ENCODE measurements at regions of chr5 and their contacts with region 1.

Region 1: DNA sequence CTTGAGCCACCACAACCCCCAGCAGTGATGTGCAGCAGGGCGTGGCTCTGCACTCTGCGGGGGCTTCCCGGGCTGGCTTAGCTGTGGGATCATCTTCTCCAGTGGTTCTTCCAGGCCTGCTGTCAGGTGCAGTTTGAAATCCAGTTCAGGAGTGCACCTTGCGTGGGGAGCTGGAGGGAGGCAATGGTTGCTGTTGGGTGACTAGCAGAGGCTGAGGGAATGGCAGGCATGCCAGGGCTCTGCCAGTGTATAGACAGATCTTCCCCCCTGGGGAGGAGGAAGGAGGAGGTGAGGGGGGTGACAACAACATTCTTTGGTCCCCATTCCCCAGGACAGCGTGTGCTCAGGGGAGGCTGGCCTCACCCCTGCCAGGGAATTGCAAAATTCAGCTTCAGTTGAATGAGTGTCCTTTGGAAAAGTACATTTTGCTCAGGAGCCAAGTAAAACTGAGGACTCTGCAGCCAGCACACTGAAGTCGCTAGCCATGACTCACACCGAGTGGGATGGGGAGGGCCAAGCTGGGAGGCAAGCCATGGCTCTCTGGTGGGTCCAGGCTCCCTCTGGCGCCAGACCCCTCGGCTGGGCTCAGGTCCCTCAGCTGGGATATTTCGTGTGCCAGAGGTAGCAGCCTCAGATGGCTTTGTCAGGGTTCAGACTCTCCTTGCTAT is 35.0 kb downstream of the ERGIC1 start:
- DNase-seq: peak; percentile 92
- H3K4me3 ChIP-seq: no peak overlapping the region
- H3K27ac ChIP-seq: peak overlapping the region; percentile 94
- H3K4me1 ChIP-seq: peaks cover 62% of the 10 kb centered on the region
- H3K27me3 ChIP-seq: no peaks in the 10 kb centered on the region
- CTCF ChIP-seq: peak; percentile 38 to 60
- POLR2A ChIP-seq: peak; percentile 51

Region 2: GRCh38 chr5:172764849-172765765 is 104.0 kb before region 1 on chr5:
- CTCF ChIA-PET with region 1: interaction called, 85 read pairs
- POLR2A ChIA-PET with region 1: interaction called, 40 read pairs
- dilution Hi-C with region 1: no loop called
- intact Hi-C with region 1: loop called (anchors 1 kb)
- DNase-seq: peak; percentile 99
- H3K4me3 ChIP-seq: peak overlapping the region in 2 of 3 experiments; percentile 16 to 28
- H3K27ac ChIP-seq: peak overlapping the region; percentile 92
- H3K4me1 ChIP-seq: peaks cover 44% of the 10 kb centered on the region
- H3K27me3 ChIP-seq: no peaks in the 10 kb centered on the region
- CTCF ChIP-seq: no peak
- POLR2A ChIP-seq: peak; percentile 16

Region 3: GRCh38 chr5:172833686-172834414 is 35.2 kb before region 1 on chr5 and contains the start of gene ERGIC1:
- CTCF ChIA-PET with region 1: interaction called, 6 read pairs
- POLR2A ChIA-PET with region 1: no interaction called
- dilution Hi-C with region 1: no loop called
- intact Hi-C with region 1: loop called (anchors 1 kb)
- DNase-seq: peak; percentile 82
- H3K4me3 ChIP-seq: peak within 1 kb of the TSS; percentile 80 to 96 (median 80)
- H3K27ac ChIP-seq: peak within 1 kb of the TSS; percentile 71
- H3K4me1 ChIP-seq: peaks cover 12% of the 10 kb centered on the region
- H3K27me3 ChIP-seq: no peaks in the 10 kb centered on the region
- CTCF ChIP-seq: no peak
- POLR2A ChIP-seq: peak; percentile 72
- total RNA-seq, gene ERGIC1: 105 and 118 TPM in 2 replicates

Region 4: GRCh38 chr5:172886974-172887501 is 18.0 kb after region 1 on chr5:
- CTCF ChIA-PET with region 1: interaction called, 8 read pairs
- POLR2A ChIA-PET with region 1: interaction called, 7 read pairs
- dilution Hi-C with region 1: no loop called
- intact Hi-C with region 1: loop called (anchors 1 kb)
- DNase-seq: peak; percentile 81
- H3K4me3 ChIP-seq: no peak overlapping the region
- H3K27ac ChIP-seq: peak overlapping the region; percentile 94
- H3K4me1 ChIP-seq: peaks cover 33% of the 10 kb centered on the region
- H3K27me3 ChIP-seq: no peaks in the 10 kb centered on the region
- CTCF ChIP-seq: no peak
- POLR2A ChIP-seq: no peak

Region 5: GRCh38 chr5:172910828-172911627 is 42.0 kb after region 1 on chr5:
- CTCF ChIA-PET with region 1: interaction called, 6 read pairs
- POLR2A ChIA-PET with region 1: no interaction called
- dilution Hi-C with region 1: no loop called
- intact Hi-C with region 1: loop called (anchors 1 kb)
- DNase-seq: peak; percentile 90
- H3K4me3 ChIP-seq: no peak overlapping the region
- H3K27ac ChIP-seq: peak overlapping the region; percentile 89
- H3K4me1 ChIP-seq: peaks cover 15% of the 10 kb centered on the region
- H3K27me3 ChIP-seq: no peaks in the 10 kb centered on the region
- CTCF ChIP-seq: peak; percentile 60 to 75
- POLR2A ChIP-seq: peak; percentile 42

Region 6: GRCh38 chr5:172958331-172959046 is 89.4 kb after region 1 on chr5:
- CTCF ChIA-PET with region 1: no interaction called
- POLR2A ChIA-PET with region 1: no interaction called
- dilution Hi-C with region 1: no loop called
- intact Hi-C with region 1: loop called (anchors 1 kb)
- DNase-seq: peak; percentile 58
- H3K4me3 ChIP-seq: peak overlapping the region; percentile 59 to 66 (median 63)
- H3K27ac ChIP-seq: peak overlapping the region; percentile 59
- H3K4me1 ChIP-seq: peaks cover 22% of the 10 kb centered on the region
- H3K27me3 ChIP-seq: no peaks in the 10 kb centered on the region
- CTCF ChIP-seq: no peak
- POLR2A ChIP-seq: no peak